Head of caudate nucleus (tissue), 42 donors: ENCODE measurements at regions of chr20 and their contacts with region 1.

Region 1: GRCh38 chr20:47205577-47206498 is 150.7 kb downstream of the ZMYND8 start:
- DNase-seq: peak in 24 of 42 donors; percentile 20 to 83 (median 66)

Region 2: GRCh38 chr20:46914789-46915379 is 291.0 kb before region 1 on chr20:
- intact Hi-C with region 1: no loop called
- DNase-seq: no peak

Region 3: DNA sequence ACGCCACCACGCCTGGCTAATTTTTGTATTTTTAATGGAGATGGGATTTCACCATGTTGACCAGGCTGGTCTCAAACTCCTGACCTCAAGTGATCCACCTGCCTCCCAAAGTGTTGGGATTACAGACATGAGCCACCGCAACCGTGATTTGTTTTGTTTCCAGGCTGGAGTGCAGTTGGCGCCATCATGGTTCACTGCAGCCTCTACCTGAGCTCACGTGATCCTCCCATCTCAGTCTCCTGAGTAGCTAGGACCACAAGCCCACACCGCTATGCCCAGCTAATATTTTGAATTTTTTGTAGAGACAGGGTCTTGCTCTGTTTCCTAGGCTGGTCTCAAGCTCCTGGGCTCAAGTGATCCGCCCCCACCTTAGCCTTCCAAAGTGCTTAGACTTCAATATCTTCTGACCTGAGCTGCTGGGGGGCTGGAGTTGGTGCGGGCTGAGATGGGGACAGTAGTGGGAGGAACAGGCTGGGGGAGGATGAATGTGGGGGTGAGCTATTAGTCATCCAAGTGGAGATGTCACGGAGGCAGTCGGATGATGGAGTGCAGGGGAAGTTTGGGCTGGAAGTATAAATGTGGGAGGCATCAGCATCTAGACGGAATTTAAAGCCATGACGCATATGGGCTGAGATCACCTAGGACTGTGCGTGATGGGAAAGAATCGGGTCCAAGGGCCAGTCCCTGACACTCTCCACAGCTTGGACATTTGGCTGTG is 173.8 kb after region 1 on chr20:
- intact Hi-C with region 1: loop called (anchors 5 kb)
- DNase-seq: peak in 37 of 42 donors; percentile 21 to 85 (median 53)

Region 4: DNA sequence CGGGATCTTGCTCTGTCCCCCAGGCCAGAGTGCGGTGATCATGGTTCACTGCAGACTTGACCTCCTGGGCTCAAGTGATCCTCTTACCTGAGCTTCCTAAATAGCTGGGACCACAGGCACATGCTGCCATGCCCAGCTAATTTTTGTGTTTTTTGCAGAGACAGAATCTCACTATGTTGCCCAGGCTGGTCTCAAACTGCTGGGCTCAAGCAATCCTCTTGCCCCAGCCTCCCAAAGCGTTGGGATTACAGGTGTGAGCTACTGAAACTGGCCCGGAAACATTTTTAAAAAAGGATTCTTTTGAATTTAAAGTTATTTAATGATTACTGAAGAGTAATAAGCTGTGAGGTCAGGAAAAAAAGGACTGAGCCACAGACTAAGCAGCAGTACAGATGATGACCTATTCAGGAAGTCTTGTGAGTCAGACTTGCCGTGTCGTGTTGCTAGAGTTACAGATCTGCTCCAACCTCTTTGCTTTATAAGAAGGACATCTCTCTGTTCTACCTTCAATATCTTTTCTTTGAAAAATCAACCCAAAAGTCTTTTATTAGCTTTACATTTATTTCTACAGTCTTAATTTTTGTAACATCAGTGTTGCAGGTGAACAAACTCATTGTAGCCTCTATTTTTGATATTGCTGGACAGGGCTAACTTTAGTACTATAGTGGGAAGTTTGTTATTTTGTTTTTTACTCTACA is 404.6 kb after region 1 on chr20:
- intact Hi-C with region 1: loop called (anchors 10 kb)
- DNase-seq: no peak